GM13976 (cell line): ENCODE measurements at regions of chr22 and their contacts with region 1.

Region 1: GRCh38 chr22:38353142-38353629 is 36.0 kb upstream of the CSNK1E start:
- DNase-seq: peak; percentile 91
- CTCF ChIP-seq: peak; percentile 93

Region 2: GRCh38 chr22:37972527-37972926 is 380.7 kb before region 1 on chr22:
- in situ Hi-C with region 1: no loop called
- DNase-seq: no peak
- CTCF ChIP-seq: no peak

Region 3: GRCh38 chr22:38040953-38041759 is 312.0 kb before region 1 on chr22:
- in situ Hi-C with region 1: loop called (anchors 10 kb)
- DNase-seq: no peak
- CTCF ChIP-seq: no peak

Region 4: DNA sequence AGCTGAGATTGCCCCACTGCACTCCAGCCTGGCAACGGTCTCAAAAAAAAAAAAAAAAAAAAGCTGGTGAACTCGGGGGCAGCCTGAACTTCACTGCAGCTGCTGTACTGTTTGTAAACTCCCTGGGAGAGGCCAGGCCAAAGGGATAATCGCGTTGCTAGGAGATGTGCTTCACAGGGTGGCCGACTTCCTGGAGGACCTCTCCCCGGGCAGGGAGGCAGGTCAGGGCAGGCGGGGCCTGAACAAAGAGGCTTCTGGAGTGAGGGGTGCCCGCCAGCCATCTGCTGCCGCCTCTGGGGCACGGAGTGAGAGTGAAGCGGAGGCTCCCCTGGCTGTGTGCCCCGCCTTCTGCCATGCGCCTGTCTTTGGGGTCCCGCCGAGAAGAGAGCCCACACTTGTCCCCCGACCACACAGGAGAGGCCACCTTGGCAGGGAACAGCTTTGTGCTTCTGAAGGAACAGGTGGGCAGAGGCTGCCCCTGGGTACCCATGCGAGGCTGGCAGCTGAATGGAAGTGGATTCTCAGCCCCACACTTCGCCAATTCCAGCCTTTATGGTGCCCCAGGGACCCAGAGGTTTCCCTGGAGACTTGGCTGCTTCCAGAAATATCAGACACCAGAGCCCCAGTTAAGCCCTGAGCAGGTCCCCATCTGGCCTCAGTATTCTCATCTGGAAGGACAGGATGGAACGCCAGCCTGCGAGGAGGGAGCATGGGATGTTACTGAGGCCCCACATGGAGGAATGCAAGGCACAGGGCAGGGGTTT is 110.0 kb before region 1 on chr22:
- in situ Hi-C with region 1: no loop called
- DNase-seq: no peak
- CTCF ChIP-seq: no peak

Region 5: DNA sequence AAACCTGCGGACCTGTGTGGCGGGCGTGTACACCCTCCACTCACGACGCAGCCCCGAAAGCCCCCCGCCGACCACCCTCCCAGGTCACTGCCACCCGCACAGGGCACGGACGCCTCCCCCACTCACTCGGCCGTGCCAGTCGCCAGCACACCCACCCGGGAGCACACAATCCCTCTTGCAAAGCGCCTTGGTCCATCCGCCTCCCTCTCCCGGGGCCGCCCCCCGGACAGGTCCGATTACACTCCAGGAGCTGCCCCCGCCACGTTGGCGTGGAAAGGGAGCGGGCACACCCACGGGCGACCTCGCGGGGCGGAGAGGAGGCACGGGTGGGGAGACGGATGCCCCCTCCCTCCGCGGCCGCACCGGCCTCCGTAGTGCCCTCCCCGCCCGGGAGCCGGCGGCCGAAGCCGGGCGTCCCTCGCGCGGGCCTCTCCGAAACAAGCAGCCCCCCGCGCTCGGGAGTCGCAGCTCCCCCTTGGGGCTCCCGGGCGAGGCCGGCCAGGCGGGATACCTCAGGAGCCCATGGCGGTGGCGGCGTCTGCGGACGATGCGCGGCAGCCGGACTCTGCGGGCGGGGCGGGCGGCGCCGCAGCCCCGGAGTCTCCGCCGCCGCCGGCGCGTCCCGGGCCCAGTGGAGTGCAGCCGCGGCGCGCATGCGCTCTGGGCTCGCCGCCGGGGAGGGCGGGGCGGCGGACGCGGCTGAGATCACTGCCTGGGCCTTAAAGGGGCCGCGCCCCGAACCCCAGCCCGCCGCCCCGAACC is 80.6 kb before region 1 on chr22 and contains the start of gene TMEM184B:
- in situ Hi-C with region 1: no loop called
- DNase-seq: peak; percentile 98
- CTCF ChIP-seq: no peak